ENCODE measurements at regions of chr16 and their contacts with region 1.

Region 1: GRCh38 chr16:84340325-84341040 is 27.9 kb upstream of the ATP2C2 start:
- DNase-seq: peak; percentile 89 to 91
- H3K4me3 ChIP-seq: no peak overlapping the region
- H3K4me3 Mint-ChIP-seq: no peak overlapping the region
- H3K27ac Mint-ChIP-seq: no peak overlapping the region
- H3K4me1 ChIP-seq: peaks cover 8% of the 10 kb centered on the region
- H3K4me1 Mint-ChIP-seq: peaks cover 9% of the 10 kb centered on the region
- H3K27me3 ChIP-seq: no peaks in the 10 kb centered on the region
- H3K27me3 Mint-ChIP-seq: no peaks in the 10 kb centered on the region
- CTCF ChIP-seq: peak; percentile 49 to 70

Region 2: GRCh38 chr16:84484579-84485254 is 144.2 kb after region 1 on chr16:
- CTCF ChIA-PET with region 1: no interaction called
- POLR2A ChIA-PET with region 1: no interaction called
- intact Hi-C with region 1: loop called (anchors 1 kb)
- DNase-seq: peak; percentile 65 to 78
- H3K4me3 ChIP-seq: no peak overlapping the region
- H3K4me3 Mint-ChIP-seq: no peak overlapping the region
- H3K27ac Mint-ChIP-seq: no peak overlapping the region
- H3K4me1 ChIP-seq: no peaks in the 10 kb centered on the region
- H3K4me1 Mint-ChIP-seq: no peaks in the 10 kb centered on the region
- H3K27me3 ChIP-seq: no peaks in the 10 kb centered on the region
- H3K27me3 Mint-ChIP-seq: no peaks in the 10 kb centered on the region
- CTCF ChIP-seq: peak; percentile 87 to 90

Measured in Caco-2 (cell line).